Left cardiac atrium (tissue), 4 donors: ENCODE measurements at regions of chr14 and their contacts with region 1.

Region 1: DNA sequence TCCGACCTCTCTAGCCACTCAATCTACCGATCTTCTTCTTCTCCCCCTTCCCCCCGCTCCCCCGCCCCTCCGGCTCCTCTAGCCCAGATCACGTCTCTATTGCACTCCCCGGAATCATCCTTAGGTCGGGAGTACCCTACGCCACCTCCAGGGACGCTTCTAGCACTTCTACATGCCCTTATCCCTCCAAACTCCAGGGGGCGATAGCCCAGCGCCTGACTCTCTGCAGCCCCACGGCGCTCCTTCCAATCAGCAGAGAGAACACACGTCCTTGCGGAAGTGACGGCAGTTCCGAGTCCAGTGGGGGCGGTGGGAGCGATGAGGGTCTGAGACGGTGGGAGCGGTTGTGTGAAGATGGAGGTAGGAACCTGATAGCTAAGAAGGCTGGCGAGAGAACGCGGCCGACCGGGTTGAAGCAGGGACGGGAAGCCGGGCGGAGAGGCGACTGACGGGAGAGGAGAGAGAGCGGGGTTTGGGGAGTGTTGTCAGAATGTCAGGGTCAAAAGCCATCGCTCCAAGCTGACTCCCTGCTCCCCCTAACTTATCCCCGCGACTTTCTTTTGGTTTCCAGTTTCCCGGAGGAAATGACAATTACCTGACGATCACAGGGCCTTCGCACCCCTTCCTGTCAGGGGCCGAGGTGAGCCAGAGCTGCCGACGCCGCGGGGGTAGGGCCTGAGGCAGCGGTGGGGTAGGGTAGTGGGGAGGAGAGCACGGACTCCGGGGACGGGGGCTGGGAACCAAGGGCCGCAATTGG is at the starts of genes RAB2B and TOX4:
- DNase-seq: peak; percentile 95
- ATAC-seq: peak; percentile 99
- total RNA-seq, gene RAB2B: 19.1 to 19.7 TPM
- total RNA-seq, gene TOX4: 63.8 to 65.1 TPM

Region 2: GRCh38 chr14:21220874-21221477 is 256.1 kb before region 1 on chr14:
- intact Hi-C with region 1: no loop called
- DNase-seq: no peak
- ATAC-seq: no peak

Region 3: DNA sequence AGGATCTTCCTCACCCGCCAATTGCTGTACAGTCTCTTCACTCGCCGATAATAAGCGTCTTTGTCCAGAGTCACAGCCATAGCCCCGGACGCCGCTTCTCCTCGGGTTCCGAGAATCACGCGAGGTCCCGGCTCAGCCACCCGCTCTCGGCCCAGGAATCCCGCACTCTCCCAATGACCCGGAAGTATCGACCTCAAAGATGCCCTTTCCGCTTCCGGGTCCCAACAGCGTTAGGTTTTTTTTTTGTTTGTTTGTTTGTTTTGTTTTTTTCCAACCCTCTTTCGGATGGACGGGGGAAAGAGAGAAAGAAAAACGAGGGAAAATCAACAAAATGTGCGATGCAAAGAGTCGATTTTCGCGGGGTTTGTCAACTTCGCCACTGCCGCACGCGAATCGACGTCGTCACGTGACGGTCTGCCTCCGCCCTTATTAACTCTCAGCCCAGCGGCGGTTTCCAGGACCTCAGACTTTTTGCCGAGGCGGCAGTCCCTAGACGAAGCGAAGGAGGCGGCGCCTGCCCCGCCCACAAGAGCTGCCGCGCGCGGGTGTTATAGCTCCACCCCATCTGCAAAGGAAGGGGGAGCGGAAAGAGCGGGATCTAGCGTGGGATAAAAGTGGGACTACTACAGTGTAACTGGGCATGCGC is 93.1 kb before region 1 on chr14 and contains the start of gene SUPT16H:
- intact Hi-C with region 1: loop called in 1 of 2 experiments (anchors 2 kb)
- DNase-seq: peak; percentile 98
- ATAC-seq: peak; percentile 98
- total RNA-seq, gene SUPT16H: 31.2 to 39.7 TPM

Region 4: DNA sequence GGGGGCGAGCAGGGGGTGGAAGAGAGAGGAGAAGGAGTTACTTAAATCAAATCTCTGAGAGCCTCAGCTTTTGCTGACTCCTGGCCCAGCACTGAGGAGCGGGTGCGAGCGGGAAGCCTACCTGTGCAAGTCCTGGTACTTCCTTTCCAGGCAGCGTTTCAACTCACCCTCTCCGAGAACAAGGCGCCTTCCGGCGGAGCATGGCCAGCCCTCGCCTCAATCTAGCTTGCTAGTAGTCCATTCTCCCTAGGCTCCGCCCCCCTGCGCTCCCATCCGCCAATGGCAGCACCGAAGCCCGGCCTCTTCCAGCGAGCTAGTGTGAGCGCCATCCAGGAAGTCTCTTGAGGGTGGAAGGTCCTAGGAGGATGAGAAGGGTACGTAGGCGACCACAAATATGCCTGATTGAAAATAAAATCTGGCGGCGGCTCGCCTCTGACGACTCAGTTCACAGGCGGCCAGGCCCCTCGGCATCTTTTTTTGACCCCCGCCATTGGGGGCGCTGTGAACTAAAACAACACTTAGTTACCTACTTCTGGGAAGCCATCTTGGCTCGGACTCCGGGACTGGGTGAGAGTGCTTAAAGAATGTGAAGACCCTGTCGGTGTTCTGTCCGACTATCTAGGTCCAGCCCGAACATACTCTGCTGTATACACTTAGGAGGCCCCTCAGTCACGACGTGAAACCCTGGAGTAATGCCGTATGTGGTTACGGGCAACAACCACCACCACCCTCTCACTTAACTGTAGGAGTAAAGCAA is 21.0 kb before region 1 on chr14 and contains the start of gene CHD8:
- intact Hi-C with region 1: loop called in 1 of 2 experiments (anchors 2 kb)
- DNase-seq: peak; percentile 100
- ATAC-seq: peak; percentile 99 to 100
- total RNA-seq, gene CHD8: 36.5 to 38.8 TPM

Region 5: DNA sequence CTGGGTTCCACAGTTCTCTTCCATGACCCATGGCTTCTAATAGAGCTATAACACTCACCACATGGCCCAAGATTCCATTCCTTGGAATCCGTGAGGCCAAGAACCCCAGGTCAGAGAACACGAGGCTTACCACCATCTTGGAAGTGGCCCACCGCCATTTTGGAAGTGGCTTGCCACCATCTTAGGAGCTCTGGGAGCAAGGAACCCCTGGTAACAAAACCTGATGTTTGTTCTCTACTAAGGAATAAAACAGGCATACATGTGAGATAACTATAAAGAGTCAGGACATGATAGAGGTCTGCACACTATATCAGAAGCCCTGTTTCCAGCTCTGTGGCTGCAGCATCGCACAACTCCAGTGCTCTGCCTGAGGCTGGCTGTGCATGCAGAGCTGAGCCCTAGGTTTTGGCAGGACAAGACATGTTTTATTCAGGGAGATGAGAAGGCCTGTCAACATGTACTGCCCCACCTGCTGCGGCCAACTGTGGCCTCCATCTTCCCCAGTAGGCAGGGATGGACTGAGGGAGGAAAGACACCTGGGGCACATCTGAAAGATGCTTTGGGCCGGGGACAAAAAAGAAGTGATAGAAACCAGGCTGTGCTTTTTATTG is 767.0 kb after region 1 on chr14:
- intact Hi-C with region 1: no loop called
- DNase-seq: no peak
- ATAC-seq: no peak